Activated T-helper 1 cell treated with anti-CD3 and anti-CD28 coated beads, Interleukin-12 subunit alpha, Interleukin-12 subunit beta, Interleukin-2, Interleukin-4 antibody, amounts not matched to agents 30 ng/mL and 10 ng/mL and 1 ng/mL, durations not matched to agents 14 hours and 24 hours and 36 hours (primary cell): ENCODE measurements at regions of chr19 and their contacts with region 1.

Region 1: GRCh38 chr19:44002566-44003460 is at the start of gene ZNF230:
- DNase-seq: peak; percentile 78
- H3K4me3 Mint-ChIP-seq: peak within 1 kb of the TSS; percentile 98
- H3K27ac Mint-ChIP-seq: peak within 1 kb of the TSS; percentile 95
- H3K4me1 Mint-ChIP-seq: peaks cover 21% of the 10 kb centered on the region
- H3K27me3 Mint-ChIP-seq: no peaks in the 10 kb centered on the region
- total RNA-seq, gene ZNF230: 4.0 and 4.3 TPM in 2 replicates

Region 2: GRCh38 chr19:43934985-43935708 is 67.7 kb before region 1 on chr19 and contains the start of gene ZNF45:
- intact Hi-C with region 1: loop called (anchors 1 kb)
- DNase-seq: peak; percentile 81
- H3K4me3 Mint-ChIP-seq: peak within 1 kb of the TSS; percentile 95
- H3K27ac Mint-ChIP-seq: peak within 1 kb of the TSS; percentile 83
- H3K4me1 Mint-ChIP-seq: peaks cover 20% of the 10 kb centered on the region
- H3K27me3 Mint-ChIP-seq: no peaks in the 10 kb centered on the region
- total RNA-seq, gene ZNF45: 11.5 and 13.1 TPM in 2 replicates

Region 3: DNA sequence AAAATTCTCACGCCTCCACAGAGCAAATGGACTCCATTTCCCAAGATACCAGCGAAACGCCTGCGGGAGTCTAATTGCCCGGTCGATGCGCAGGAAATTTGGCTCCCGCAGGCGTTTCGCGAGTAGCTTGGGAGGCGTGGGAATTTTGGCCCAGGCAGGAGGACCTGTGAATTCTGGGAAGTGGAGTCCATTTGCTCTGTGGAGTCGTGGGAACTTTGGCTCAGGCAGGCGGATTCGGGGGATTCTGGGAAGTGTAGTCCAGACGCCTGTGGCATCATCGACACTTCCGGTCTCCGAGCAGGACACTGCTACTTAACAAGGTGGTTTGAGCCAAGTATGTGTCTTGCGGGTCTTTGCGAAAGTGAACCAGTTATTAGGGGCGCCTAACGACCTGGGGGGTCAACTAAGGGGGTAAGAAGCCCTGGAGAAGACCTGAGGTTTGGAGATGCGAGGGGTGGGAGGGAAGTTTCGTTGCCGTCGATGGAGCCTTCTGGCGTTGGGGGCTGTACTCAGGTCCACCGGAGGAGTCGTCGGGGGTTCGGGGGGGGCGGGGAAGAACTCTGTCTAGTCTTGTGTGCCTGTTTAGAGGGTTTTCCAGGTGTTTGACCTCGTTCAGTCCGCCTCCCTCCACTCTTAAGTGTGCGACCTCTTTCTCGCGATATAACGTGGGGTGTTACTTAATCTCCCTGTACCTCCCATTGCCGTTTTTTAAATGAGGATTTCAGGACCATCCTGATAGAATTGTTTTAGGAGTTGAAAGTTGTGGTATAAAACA is 18.7 kb before region 1 on chr19 and contains the start of gene ZNF155:
- intact Hi-C with region 1: loop called (anchors 1 kb)
- DNase-seq: peak; percentile 56
- H3K4me3 Mint-ChIP-seq: peak within 1 kb of the TSS; percentile 94
- H3K27ac Mint-ChIP-seq: peak within 1 kb of the TSS; percentile 88
- H3K4me1 Mint-ChIP-seq: peaks cover 8% of the 10 kb centered on the region
- H3K27me3 Mint-ChIP-seq: no peaks in the 10 kb centered on the region
- total RNA-seq, gene ZNF155: 5.2 and 6.5 TPM in 2 replicates

Region 4: GRCh38 chr19:44042147-44042546 is 39.3 kb after region 1 on chr19:
- intact Hi-C with region 1: no loop called
- DNase-seq: no peak
- H3K4me3 Mint-ChIP-seq: no peak overlapping the region
- H3K27ac Mint-ChIP-seq: no peak overlapping the region
- H3K4me1 Mint-ChIP-seq: no peaks in the 10 kb centered on the region
- H3K27me3 Mint-ChIP-seq: no peaks in the 10 kb centered on the region

Region 5: DNA sequence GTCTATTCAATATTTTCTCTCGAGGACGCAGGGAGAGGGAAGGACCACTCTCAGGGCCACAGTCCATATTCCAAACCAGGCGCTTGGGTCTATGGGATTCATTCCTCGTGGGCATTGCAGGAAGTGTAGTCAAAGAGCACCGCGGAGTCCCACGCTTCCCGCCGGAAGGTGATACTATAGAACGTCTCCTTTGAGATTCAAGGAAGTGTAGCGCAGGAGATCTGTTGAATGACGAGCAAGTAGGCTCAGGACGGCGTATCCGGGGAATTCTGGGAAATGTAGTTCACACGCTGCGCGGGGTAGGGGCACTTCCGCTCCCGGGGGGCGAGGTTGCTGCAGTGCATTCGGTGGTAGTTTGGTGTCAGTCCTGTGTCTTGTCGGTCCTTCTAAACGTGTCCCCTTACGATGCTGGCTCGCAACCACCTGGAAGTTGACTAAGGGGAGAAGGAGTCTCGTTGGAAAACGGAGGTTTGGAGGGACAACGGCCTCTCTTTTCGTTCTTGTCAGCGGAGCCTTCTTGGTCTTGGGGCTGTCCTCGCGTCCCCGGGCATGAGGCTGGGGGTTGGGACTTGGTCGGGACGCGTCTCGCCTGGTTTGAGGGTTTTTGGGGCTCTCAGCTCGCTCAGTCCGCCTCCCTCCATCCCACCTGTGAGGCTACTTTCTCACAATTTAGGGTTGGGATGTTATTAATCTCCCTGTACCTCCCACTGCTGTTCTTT is 69.2 kb after region 1 on chr19 and contains the start of gene ZNF284:
- intact Hi-C with region 1: loop called (anchors 1 kb)
- DNase-seq: peak; percentile 74
- H3K4me3 Mint-ChIP-seq: peak within 1 kb of the TSS; percentile 86
- H3K27ac Mint-ChIP-seq: peak within 1 kb of the TSS; percentile 79
- H3K4me1 Mint-ChIP-seq: peaks cover 17% of the 10 kb centered on the region
- H3K27me3 Mint-ChIP-seq: no peaks in the 10 kb centered on the region
- total RNA-seq, gene ZNF284: 1.3 and 1.4 TPM in 2 replicates

Region 6: GRCh38 chr19:44113138-44113783 is 110.4 kb after region 1 on chr19 and contains the start of gene ZNF225:
- intact Hi-C with region 1: loop called (anchors 1 kb)
- DNase-seq: peak; percentile 81
- H3K4me3 Mint-ChIP-seq: peak within 1 kb of the TSS; percentile 100
- H3K27ac Mint-ChIP-seq: peak within 1 kb of the TSS; percentile 88
- H3K4me1 Mint-ChIP-seq: peaks cover 30% of the 10 kb centered on the region
- H3K27me3 Mint-ChIP-seq: no peaks in the 10 kb centered on the region
- total RNA-seq, gene ZNF225: 3.8 and 5.0 TPM in 2 replicates

Region 7: GRCh38 chr19:44207126-44207803 is 204.5 kb after region 1 on chr19:
- intact Hi-C with region 1: loop called (anchors 5 kb)
- DNase-seq: peak; percentile 73
- H3K4me3 Mint-ChIP-seq: peak overlapping the region; percentile 86
- H3K27ac Mint-ChIP-seq: peak overlapping the region; percentile 69
- H3K4me1 Mint-ChIP-seq: peaks cover 16% of the 10 kb centered on the region
- H3K27me3 Mint-ChIP-seq: peaks cover 2% of the 10 kb centered on the region